Panc1 (cell line): ENCODE measurements at regions of chr6 and their contacts with region 1.

Region 1: DNA sequence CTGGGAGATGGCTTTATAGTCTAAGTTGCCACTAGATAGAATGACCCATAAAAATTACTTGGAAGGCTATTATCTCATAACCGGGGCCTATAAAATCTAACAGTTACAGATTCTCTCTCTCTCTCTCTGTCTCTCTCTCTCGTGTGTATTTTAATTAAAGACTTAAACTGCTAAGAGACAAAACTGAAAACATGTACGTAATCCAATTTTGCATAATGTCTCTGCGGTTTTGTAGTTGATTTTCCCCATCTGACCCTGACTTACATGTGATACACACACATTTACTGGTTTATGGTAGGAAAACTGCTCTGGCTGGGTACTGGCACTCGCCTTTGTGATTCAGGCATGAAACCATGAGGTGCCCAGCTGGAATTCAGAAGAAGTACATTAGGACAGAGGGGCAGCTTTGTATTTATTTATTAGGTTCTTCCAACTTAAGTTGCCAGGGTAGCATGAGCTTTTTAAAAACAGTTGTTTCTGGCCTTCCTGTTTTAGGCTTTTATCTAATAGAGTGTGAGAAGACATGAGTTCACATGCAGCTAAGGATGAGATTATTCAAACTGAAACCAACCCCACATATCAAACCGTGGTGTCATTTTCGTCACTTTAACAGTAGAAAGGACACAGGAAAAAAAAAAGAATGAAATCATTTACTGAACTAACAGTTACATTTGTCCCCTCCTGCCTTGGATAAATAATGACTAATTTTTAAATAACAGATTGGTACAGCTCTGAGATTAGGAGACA is 182.5 kb downstream of the GMPR start:
- DNase-seq: no peak
- ATAC-seq: no peak; the same call in 1 of the 2 replicates
- H3K4me3 ChIP-seq: no peak overlapping the region
- H3K27ac ChIP-seq: no peak overlapping the region; the same call in 1 of the 2 replicates
- H3K4me1 ChIP-seq: peaks cover 21% of the 10 kb centered on the region
- H3K27me3 ChIP-seq: no peaks in the 10 kb centered on the region
- CTCF ChIP-seq: no peak

Region 2: GRCh38 chr6:16481697-16482399 is 61.0 kb after region 1 on chr6:
- CTCF ChIA-PET with region 1: no interaction called
- POLR2A ChIA-PET with region 1: interaction called, 12 read pairs
- in situ Hi-C with region 1: no loop called
- intact Hi-C with region 1: no loop called
- DNase-seq: no peak
- ATAC-seq: no peak
- H3K4me3 ChIP-seq: no peak overlapping the region
- H3K27ac ChIP-seq: no peak overlapping the region
- H3K4me1 ChIP-seq: no peaks in the 10 kb centered on the region
- H3K27me3 ChIP-seq: no peaks in the 10 kb centered on the region
- CTCF ChIP-seq: no peak

Region 3: GRCh38 chr6:16635810-16636602 is 215.1 kb after region 1 on chr6:
- CTCF ChIA-PET with region 1: no interaction called
- POLR2A ChIA-PET with region 1: no interaction called
- in situ Hi-C with region 1: no loop called
- intact Hi-C with region 1: no loop called
- DNase-seq: no peak
- ATAC-seq: peak; percentile 73
- H3K4me3 ChIP-seq: no peak overlapping the region
- H3K27ac ChIP-seq: peak overlapping the region; percentile 40; the same call in 1 of the 2 replicates
- H3K4me1 ChIP-seq: peaks cover 15% of the 10 kb centered on the region
- H3K27me3 ChIP-seq: no peaks in the 10 kb centered on the region
- CTCF ChIP-seq: no peak

Region 4: DNA sequence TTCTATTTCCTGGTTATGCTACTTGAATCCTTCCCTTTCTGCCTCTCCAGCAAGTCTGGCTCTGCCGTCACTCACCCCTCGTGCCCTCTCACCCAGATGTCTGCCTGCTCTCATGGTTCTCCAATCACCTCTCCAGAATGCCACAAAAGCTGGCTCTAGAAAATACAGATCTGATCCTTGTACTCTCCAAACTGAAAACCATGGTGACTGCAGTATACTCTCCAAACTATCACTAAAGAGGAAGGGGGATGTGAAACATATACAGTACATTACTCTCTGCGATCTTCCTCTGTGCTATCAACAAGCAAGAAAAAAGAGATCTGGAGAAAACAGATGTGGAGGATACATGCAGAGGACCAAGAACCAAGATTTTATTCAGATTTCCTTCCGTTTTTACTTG is 249.3 kb after region 1 on chr6:
- CTCF ChIA-PET with region 1: no interaction called
- POLR2A ChIA-PET with region 1: no interaction called
- in situ Hi-C with region 1: no loop called
- intact Hi-C with region 1: no loop called
- DNase-seq: no peak
- ATAC-seq: no peak
- H3K4me3 ChIP-seq: no peak overlapping the region
- H3K27ac ChIP-seq: 0 out of 2 replicates have a peak overlapping the region, but pooled peaks have one; percentile 34
- H3K4me1 ChIP-seq: peaks cover 63% of the 10 kb centered on the region
- H3K27me3 ChIP-seq: no peaks in the 10 kb centered on the region
- CTCF ChIP-seq: no peak